ENCODE measurements at regions of chr15 and their contacts with region 1.

Region 1: GRCh38 chr15:65916664-65917406 is 47.5 kb downstream of the RAB11A start:
- DNase-seq: peak; percentile 64
- ATAC-seq: peak; percentile 91
- H3K4me3 Mint-ChIP-seq: peak overlapping the region; percentile 69
- H3K27ac Mint-ChIP-seq: peak overlapping the region; percentile 64
- H3K4me1 Mint-ChIP-seq: peaks cover 72% of the 10 kb centered on the region
- H3K27me3 Mint-ChIP-seq: no peaks in the 10 kb centered on the region
- CTCF ChIP-seq: no peak

Region 2: GRCh38 chr15:64949409-64950221 is 967.2 kb before region 1 on chr15:
- CTCF ChIA-PET with region 1: no interaction called
- POLR2A ChIA-PET with region 1: no interaction called
- intact Hi-C with region 1: no loop called
- DNase-seq: no peak
- ATAC-seq: no peak
- H3K4me3 Mint-ChIP-seq: no peak overlapping the region
- H3K27ac Mint-ChIP-seq: no peak overlapping the region
- H3K4me1 Mint-ChIP-seq: peaks cover 36% of the 10 kb centered on the region
- H3K27me3 Mint-ChIP-seq: no peaks in the 10 kb centered on the region
- CTCF ChIP-seq: no peak

Region 3: GRCh38 chr15:65902378-65902777 is 14.5 kb before region 1 on chr15:
- CTCF ChIA-PET with region 1: interaction called, 6 read pairs
- POLR2A ChIA-PET with region 1: interaction called, 11 read pairs
- intact Hi-C with region 1: loop called (anchors 1 kb)
- DNase-seq: peak; percentile 46
- ATAC-seq: peak; percentile 99
- H3K4me3 Mint-ChIP-seq: peak overlapping the region; percentile 17
- H3K27ac Mint-ChIP-seq: peak overlapping the region; percentile 61
- H3K4me1 Mint-ChIP-seq: peaks cover 43% of the 10 kb centered on the region
- H3K27me3 Mint-ChIP-seq: no peaks in the 10 kb centered on the region
- CTCF ChIP-seq: no peak

Measured in activated B cell treated with CpG ODN at 0.5 μM for 24 hours (primary cell).